Endothelial cell of umbilical vein (primary cell): ENCODE measurements at regions of chr1 and their contacts with region 1.

Region 1: DNA sequence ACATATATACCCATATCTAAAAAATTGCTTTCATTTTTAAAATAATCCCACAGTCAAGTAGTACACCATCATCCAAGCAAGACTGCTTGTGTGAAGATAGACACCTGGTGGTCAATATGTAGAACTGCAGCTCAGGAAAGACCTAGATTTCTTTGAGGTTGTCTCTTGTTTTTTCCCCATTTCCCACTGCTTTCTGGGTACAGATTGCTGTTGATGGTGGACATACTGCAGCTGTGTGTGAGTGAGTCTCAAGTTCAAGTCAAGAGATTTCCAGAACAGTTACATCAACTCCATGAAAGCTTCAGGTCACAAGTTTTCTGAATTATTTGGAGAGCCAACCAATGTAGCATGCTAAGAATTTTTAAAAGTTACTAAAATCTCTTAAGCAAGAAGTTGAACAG is 306.4 kb downstream of the DUSP10 start:
- DNase-seq: peak; percentile 75
- H3K4me3 ChIP-seq: no peak overlapping the region
- H3K27ac ChIP-seq: peak overlapping the region; percentile 16
- H3K4me1 ChIP-seq: peaks cover 26% of the 10 kb centered on the region
- H3K27me3 ChIP-seq: no peaks in the 10 kb centered on the region
- CTCF ChIP-seq: peak; percentile 73 to 81
- POLR2A ChIP-seq: no peak

Region 2: DNA sequence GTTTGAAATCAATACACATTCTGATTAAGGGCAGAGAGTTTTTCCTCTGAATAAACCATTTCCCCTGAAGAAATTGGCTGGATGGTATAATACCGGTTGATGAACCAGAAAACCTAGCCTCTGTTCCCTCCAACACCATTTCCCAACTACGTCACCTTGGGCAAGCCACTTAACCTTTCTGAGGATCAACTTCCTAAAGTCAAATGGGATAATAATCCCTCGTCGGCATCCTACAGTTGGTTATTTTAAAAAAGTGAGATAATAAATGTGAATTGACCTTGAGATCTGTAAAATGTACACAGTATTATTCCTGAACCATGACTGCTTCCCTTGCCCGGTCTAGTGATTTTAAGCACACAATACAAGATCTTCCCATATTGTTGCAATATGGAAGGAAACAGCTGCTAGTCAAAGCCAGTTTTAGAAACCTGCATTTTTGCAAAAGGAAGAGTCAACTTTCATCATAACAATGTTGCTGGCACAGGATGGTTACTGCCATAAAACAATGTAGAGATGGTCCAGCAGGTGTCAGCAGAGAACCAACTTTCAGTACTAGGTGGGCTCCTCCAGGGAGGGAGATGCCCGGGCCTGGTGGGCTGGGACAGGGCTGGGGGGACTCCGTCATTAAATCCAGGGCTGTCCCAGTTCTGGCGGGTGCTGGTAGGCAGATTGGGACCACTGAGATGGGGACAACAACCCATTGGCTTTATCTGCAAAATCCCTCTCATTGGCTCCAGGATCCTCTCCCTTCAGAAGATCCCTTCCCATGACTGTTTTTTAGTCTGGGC is 561.4 kb before region 1 on chr1:
- CTCF ChIA-PET with region 1: interaction called, 62 read pairs
- POLR2A ChIA-PET with region 1: interaction called, 4 read pairs
- dilution Hi-C with region 1: no loop called
- intact Hi-C with region 1: loop called (anchors 1 kb)
- DNase-seq: peak; percentile 93
- H3K4me3 ChIP-seq: no peak overlapping the region
- H3K27ac ChIP-seq: peak overlapping the region; percentile 0
- H3K4me1 ChIP-seq: peaks cover 37% of the 10 kb centered on the region
- H3K27me3 ChIP-seq: peaks cover 3 to 14% of the 10 kb centered on the region in 2 experiments
- CTCF ChIP-seq: peak; percentile 52 to 69
- POLR2A ChIP-seq: no peak

Region 3: GRCh38 chr1:221035680-221036153 is 399.8 kb before region 1 on chr1:
- CTCF ChIA-PET with region 1: interaction called, 5 read pairs
- POLR2A ChIA-PET with region 1: no interaction called
- dilution Hi-C with region 1: no loop called
- intact Hi-C with region 1: loop called (anchors 2 kb)
- DNase-seq: peak; percentile 84
- H3K4me3 ChIP-seq: peak overlapping the region in 1 of 3 experiments; percentile 42
- H3K27ac ChIP-seq: peak overlapping the region; percentile 69
- H3K4me1 ChIP-seq: peaks cover 48% of the 10 kb centered on the region
- H3K27me3 ChIP-seq: no peaks in the 10 kb centered on the region
- CTCF ChIP-seq: no peak
- POLR2A ChIP-seq: no peak

Region 4: DNA sequence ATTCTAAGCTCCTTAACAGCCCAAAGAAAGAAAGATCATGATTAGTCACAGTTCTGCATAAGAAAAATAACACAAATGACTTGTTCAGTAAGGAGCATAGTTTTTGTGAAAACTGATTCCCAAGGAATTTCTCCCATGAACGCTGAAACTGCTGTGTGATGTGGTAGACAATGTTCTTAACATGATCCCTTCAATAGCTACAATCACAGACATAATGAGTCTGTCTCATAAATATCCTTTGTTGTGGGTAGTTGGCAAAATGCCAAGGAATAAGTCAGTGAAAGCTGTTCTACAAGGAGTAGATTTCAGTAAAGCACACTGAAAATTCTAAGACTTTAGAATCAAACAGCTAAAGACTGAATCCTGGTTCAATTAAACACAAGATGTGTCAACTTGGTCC is 151.5 kb before region 1 on chr1:
- CTCF ChIA-PET with region 1: interaction called, 3 read pairs
- POLR2A ChIA-PET with region 1: no interaction called
- dilution Hi-C with region 1: no loop called
- intact Hi-C with region 1: loop called (anchors 5 kb)
- DNase-seq: peak; percentile 56
- H3K4me3 ChIP-seq: no peak overlapping the region
- H3K27ac ChIP-seq: no peak overlapping the region
- H3K4me1 ChIP-seq: no peaks in the 10 kb centered on the region
- H3K27me3 ChIP-seq: peaks cover 0 to 1% of the 10 kb centered on the region in 2 experiments
- CTCF ChIP-seq: no peak
- POLR2A ChIP-seq: no peak

Region 5: DNA sequence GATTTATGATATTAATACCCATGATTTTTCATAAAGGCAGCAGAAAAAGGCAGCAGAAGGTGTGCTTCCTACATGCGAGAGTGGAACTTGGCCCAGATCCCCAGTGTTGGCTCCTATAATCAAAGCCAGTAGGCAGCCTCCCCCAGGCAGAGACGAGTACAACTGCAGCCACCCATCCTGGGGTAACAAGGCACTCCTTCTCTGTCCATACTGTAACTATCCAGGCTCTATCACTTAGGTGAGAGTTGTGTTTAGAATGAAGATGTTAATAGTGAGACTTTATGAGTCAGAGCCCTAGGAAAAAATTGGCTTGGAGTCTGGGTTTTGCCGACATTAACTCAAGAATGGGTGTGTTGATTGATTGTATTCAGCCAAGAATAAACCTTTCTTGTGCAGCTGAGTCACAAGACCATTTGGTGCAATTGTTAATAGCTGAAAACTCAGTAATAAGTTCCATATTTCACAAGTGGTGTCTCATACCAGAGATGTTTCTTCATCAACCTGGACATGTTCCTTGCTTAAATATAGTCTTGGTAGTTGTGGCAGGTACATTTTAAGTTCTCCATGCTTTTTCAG is 15.9 kb before region 1 on chr1:
- CTCF ChIA-PET with region 1: interaction called, 11 read pairs
- POLR2A ChIA-PET with region 1: no interaction called
- dilution Hi-C with region 1: no loop called
- intact Hi-C with region 1: loop called (anchors 1 kb)
- DNase-seq: peak; percentile 60
- H3K4me3 ChIP-seq: no peak overlapping the region
- H3K27ac ChIP-seq: no peak overlapping the region
- H3K4me1 ChIP-seq: peaks cover 24% of the 10 kb centered on the region
- H3K27me3 ChIP-seq: no peaks in the 10 kb centered on the region
- CTCF ChIP-seq: no peak
- POLR2A ChIP-seq: no peak

Region 6: DNA sequence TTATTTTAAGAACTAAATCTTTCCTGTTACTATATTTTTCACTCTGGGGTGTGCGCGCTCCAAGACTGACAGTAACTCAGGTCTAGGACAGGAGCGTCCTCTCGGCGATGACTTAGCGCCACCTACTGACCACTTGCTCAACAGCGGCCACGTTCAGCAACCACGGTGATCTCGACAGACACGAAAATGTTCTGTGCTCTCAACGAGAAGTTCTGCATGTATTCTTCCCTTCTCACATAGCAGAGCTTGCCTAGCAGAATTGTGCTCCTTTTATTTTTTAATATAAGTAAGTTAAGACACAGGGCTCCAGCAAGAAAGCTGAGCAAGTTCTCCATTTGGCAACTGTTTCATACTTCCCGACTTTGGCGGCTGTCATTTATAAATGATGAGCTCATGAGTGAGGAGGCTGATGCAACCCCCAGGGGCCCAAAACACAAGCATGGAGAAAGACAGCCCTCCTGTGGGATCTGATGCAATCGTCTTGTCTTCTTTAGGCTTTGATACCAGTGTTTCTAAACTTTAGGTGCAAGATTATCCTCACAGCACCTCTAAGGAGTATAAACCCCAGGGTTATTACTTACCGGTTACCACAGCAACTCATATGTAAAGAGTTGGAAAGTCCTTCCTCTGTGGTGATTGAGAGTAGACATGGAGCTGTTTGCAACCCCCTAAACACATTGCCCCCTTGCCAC is 1019.8 kb after region 1 on chr1:
- CTCF ChIA-PET with region 1: interaction called, 22 read pairs
- POLR2A ChIA-PET with region 1: no interaction called
- dilution Hi-C with region 1: no loop called
- intact Hi-C with region 1: no loop called
- DNase-seq: peak; percentile 73
- H3K4me3 ChIP-seq: no peak overlapping the region
- H3K27ac ChIP-seq: no peak overlapping the region
- H3K4me1 ChIP-seq: no peaks in the 10 kb centered on the region
- H3K27me3 ChIP-seq: peaks cover 2 to 3% of the 10 kb centered on the region in 2 experiments
- CTCF ChIP-seq: peak; percentile 90 to 94
- POLR2A ChIP-seq: no peak